ENCODE measurements at regions of chr12 and their contacts with region 1.

Region 1: GRCh38 chr12:19893514-19893913 is 454.2 kb downstream of the AEBP2 start:
- DNase-seq: no peak
- H3K4me3 ChIP-seq: no peak overlapping the region
- H3K27me3 ChIP-seq: no peaks in the 10 kb centered on the region
- CTCF ChIP-seq: peak; percentile 39

Region 2: GRCh38 chr12:19739183-19739776 is 154.2 kb before region 1 on chr12:
- CTCF ChIA-PET with region 1: interaction called, 13 read pairs
- POLR2A ChIA-PET with region 1: no interaction called
- DNase-seq: no peak
- H3K4me3 ChIP-seq: no peak overlapping the region
- H3K27me3 ChIP-seq: no peaks in the 10 kb centered on the region
- CTCF ChIP-seq: peak; percentile 55

Region 3: GRCh38 chr12:19757317-19757877 is 136.1 kb before region 1 on chr12:
- CTCF ChIA-PET with region 1: interaction called, 14 read pairs
- POLR2A ChIA-PET with region 1: no interaction called
- DNase-seq: no peak
- H3K4me3 ChIP-seq: no peak overlapping the region
- H3K27me3 ChIP-seq: no peaks in the 10 kb centered on the region
- CTCF ChIP-seq: peak; percentile 70

Region 4: DNA sequence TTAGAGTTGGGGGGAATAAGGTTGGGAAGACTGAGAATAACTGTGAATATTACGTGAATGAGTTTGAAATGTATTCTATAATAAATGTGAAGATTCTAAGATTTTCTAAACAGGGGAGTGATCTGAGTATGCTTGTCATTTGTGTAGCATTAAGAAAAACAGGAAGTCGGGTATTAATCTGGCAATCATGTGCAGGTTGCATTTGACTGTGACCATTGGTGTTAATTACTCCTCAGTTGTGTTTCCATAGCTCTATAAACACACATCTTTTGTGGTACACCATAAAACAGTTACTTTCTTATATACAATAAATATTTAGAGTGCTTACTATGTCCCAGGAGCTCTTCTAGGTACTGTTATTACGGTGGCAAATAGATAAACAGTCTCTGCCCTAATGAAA is 40.4 kb after region 1 on chr12:
- CTCF ChIA-PET with region 1: no interaction called
- POLR2A ChIA-PET with region 1: no interaction called
- DNase-seq: no peak
- H3K4me3 ChIP-seq: no peak overlapping the region
- H3K27me3 ChIP-seq: no peaks in the 10 kb centered on the region
- CTCF ChIP-seq: no peak

Measured in BJ (cell line).